ENCODE measurements at regions of chr9 and their contacts with region 1.

Region 1: GRCh38 chr9:23821375-23822181 is 4.5 kb downstream of the ELAVL2 start:
- DNase-seq: no peak
- H3K4me3 Mint-ChIP-seq: no peak overlapping the region
- H3K27ac Mint-ChIP-seq: peak overlapping the region; percentile 67
- H3K4me1 Mint-ChIP-seq: no peaks in the 10 kb centered on the region
- H3K27me3 Mint-ChIP-seq: peaks cover 18% of the 10 kb centered on the region

Region 2: DNA sequence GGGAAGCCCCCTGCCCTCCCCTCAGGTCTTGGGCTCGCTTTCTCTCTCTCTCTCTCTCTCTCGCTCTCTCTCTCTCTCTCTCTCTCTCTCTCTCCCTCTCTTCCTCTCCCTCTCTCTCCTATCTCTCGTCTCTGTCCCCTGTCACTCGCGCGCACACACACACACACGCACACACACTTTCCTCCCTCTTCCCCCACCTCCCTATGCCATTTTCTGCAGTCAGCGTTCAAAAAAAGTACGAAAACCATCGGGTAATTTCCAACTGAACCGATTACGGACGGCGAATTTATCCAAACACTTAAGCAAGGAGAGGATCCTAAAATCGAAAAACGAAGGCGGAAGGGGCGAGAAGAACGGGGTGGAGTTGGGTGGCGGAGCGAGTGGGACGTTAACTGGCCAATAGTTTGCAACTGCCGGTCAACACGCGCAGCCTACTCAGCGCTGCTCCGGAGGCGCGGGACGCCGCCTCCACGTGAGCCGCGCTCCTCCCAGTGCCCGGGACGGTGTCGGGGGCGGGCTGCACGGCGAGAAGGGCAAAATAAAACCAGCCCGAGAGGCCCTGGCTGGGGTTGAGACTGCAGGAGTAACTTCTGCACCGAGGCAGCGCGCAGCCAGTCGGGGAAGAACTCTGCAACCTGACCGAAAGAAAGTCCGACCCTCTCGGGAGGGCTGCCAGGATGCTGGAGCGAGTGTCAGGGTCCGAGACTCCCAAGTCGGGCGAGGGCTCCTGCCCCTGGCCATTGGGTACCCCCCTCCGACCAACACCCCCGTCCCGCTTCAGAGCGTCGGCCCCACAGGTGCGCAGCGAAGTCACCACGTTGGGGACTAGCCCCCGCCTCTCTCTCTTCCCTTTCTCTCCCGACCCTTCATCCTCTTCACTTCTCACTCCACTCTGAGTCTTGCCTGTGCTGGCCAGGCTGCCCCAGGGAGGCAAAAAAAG is 29.4 kb after region 1 on chr9:
- intact Hi-C with region 1: loop called (anchors 1 kb)
- DNase-seq: no peak
- H3K4me3 Mint-ChIP-seq: no peak overlapping the region
- H3K27ac Mint-ChIP-seq: no peak overlapping the region
- H3K4me1 Mint-ChIP-seq: no peaks in the 10 kb centered on the region
- H3K27me3 Mint-ChIP-seq: peaks cover 19% of the 10 kb centered on the region

Region 3: GRCh38 chr9:24071716-24072115 is 250.1 kb after region 1 on chr9:
- intact Hi-C with region 1: no loop called
- DNase-seq: no peak
- H3K4me3 Mint-ChIP-seq: no peak overlapping the region
- H3K27ac Mint-ChIP-seq: no peak overlapping the region
- H3K4me1 Mint-ChIP-seq: no peaks in the 10 kb centered on the region
- H3K27me3 Mint-ChIP-seq: no peaks in the 10 kb centered on the region